ENCODE measurements at regions of chr1 and their contacts with region 1.

Region 1: DNA sequence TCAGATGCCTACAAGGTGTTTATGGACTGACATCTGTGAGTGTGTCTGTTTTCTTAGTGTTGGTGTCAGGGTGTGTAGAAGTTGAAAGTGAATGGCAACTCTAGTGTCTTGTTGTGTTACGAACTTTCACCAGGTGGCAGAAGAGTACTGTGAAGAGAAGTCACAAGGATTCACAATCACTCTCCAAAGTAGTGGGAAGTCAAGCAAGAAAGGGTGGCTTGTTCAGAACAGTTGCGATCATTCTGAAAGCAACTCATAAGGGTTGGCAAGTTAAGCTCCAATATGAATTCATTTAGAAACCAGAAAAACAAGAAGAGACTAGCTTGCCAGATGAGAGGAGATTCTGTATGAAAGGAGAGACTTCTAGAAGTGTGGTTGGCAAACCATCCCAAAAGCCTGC is 86.1 kb downstream of the FASLG start:
- DNase-seq: peak; percentile 47
- CTCF ChIP-seq: peak; percentile 59

Region 2: GRCh38 chr1:172638885-172639831 is 105.9 kb before region 1 on chr1:
- in situ Hi-C with region 1: no loop called
- DNase-seq: no peak
- CTCF ChIP-seq: no peak

Region 3: DNA sequence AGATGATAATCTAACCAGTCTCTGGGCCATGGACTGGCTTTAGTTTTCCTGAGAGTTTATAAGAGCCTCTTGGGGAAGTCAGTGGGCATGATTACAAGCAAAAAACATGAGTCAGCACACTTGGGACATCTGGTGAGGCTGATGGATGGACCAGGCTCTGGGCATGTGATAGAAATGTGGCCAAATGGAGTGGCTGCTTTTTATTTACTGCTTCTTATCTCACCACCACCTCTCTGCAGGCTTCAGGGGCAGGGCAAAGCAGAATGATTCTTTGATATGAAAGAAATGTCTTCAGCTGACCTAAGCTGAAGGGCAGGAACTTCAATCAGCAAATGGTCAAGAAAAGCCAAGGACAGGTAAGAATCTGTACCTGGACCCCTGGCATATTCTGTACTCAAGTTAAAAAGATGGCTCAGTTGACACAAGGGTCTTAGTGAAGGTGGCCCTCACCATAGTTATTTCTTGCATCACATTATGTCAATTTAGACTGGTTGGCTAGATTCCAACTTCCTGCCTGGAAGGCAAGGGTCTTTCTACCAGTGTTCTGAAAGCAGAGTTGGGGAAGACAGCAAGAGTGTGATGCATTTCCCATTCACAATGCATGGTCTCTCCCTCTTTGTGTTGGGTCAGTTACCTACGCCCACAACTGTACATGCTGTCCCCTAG is 76.7 kb after region 1 on chr1:
- in situ Hi-C with region 1: loop called (anchors 5 kb)
- DNase-seq: no peak
- CTCF ChIP-seq: no peak

Region 4: DNA sequence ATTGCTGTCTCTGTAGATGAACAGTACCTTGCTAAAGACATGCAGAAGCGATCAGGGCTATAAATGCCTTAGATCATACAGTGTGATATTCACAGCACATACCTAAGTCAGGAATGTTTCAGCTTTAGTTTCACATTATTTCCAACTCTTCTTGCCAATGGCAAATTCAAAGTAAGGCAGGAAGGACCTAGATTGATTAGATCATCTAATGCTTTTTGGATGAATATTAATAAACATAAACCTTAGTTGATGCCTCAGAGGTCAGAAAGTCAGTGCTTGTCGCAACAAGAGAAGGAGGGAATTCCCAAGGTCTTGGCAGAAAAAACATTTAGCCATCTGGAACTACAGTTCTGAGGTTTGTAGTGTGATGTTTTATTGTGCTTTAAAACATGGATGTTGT is 183.4 kb after region 1 on chr1:
- in situ Hi-C with region 1: no loop called
- DNase-seq: no peak
- CTCF ChIP-seq: no peak

Region 5: DNA sequence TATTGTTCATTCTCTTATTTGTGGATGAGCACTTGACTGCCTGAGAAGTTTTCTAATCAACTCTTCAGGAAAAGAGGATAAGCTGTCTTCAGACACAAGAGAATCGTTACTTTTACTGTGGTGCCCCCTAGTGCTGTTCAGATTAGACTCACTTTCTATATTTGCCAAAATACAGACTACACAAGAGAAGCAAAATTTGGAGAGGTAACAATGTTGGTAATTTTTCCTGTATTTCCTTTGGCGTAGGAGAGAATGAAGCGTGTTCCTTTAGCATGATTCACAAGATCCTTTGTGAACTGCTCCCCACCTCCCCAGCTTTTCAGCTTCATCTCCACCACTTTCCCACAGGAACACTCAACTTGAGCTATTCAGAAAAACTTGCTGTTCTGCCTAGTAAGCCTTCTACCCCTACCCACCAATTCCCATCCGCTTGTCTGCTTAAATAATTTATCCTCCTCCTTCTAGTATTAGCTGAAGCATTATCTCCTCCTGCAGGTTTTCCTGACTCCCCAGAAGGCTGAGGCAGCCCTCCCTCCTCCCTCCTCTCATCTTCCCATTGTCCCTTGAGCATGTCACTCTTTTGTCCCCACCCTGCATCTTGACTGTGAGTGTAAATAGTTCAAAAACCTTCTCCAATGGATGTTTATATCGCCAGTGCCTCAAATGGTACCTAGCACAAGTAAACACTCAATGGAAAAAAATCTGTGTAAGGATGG is 457.6 kb after region 1 on chr1:
- in situ Hi-C with region 1: loop called (anchors 5 kb)
- DNase-seq: no peak
- CTCF ChIP-seq: peak; percentile 23

Region 6: DNA sequence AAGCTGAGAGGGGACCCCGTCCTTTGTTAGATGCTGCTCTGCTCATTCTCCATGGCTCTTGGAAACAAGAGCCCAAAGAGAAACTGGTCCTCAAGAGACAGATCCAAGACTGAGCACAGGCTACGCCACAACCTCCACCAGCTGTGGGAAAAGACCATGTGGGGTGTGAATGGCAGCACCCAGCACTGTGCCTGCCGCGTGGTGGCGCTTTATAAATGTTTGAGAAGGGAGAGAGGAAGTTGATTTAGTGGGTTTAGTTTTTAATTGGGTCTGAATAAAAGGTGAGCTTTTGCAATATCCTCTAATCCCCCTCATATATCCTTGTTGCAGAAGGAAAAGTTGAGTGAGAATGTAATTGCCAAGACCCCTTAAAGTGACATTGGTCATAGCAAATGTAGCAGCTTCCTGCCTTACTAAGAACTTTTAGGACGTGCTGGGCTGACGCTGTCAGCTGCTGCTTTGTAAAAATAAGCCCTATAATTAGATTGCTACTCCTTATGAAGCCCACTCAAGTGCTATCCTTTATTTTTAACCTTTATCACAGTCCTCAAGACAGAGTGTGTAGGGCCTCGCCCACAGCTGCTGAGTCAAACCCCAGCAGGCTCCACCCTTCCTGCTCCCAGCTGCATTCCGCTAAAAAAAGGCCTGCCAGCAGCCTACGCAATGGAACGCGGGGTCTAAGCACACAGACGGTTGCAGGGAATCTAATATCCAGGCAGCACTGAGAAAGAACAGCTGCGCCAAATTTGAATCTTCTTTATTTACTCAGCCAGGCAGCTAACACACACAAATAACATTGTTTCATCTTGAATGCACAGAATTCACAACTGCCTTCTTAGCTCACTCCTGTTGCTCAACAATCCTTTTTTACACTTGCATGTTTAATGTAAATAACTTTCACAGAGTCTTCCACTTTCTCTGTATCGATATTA is 684.7 kb after region 1 on chr1:
- in situ Hi-C with region 1: loop called (anchors 10 kb)
- DNase-seq: peak; percentile 42
- CTCF ChIP-seq: peak; percentile 90

Region 7: GRCh38 chr1:173824331-173825081 is 1079.5 kb after region 1 on chr1 and contains the starts of genes CENPL and DARS2:
- in situ Hi-C with region 1: loop called (anchors 25 kb)
- DNase-seq: peak; percentile 89
- CTCF ChIP-seq: no peak

Measured in GM13976 (cell line).